CD4-positive, alpha-beta T cell (primary cell): ENCODE measurements at regions of chr17 and their contacts with region 1.

Region 1: DNA sequence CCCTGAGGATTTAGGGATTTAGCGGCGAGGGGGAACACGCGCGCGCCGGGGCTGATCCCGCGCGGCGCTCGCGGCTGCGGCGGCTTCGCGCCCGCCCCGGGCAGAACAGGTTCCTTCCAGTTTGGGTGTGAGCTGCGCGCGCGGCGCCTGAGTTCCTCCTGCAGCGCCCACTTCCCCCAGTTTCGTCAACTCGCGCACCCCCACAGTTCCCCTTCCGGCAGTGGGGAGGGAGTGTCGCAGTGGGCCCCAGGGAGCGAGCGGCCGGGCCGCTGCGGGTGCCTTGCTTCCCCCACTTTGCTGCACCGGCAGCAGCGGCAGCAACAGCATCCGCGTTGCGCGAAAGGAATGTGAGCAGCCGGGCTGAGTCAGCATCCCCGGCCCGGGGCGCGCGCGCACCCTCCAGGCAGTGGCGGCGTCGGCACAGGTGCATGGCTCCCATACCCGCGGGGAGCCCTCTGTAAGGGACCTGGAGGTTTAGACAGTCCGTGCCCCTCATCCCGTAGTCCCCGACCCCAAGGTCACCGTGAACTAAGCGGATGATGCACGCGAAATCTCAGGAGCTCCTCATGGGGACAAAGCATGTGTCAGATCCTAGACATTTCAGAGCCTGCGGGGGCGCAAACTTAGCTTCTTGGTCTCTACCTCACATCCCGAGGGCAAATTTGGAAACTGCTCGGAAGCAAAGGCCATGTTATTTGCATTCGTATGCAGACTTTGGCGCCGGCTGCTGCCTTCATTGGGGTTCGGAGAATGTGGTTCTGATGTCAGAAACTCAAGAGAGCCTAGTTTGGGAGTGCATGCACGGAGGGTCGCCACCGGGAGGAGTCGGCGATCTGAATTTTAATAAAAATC is 775 bp downstream of the ARSG start:
- DNase-seq: peak; percentile 85 to 98 (median 92)
- ATAC-seq: peak; percentile 69
- H3K4me3 ChIP-seq: peak overlapping the region; percentile 56
- H3K4me3 Mint-ChIP-seq: peak overlapping the region; percentile 89
- H3K27ac ChIP-seq: peak overlapping the region; percentile 5 to 82
- H3K27ac Mint-ChIP-seq: peak overlapping the region; percentile 98
- H3K4me1 ChIP-seq: peaks cover 71% of the 10 kb centered on the region
- H3K4me1 Mint-ChIP-seq: peaks cover 76% of the 10 kb centered on the region
- H3K27me3 ChIP-seq: no peaks in the 10 kb centered on the region
- H3K27me3 Mint-ChIP-seq: no peaks in the 10 kb centered on the region
- CTCF ChIP-seq: no peak

Region 2: DNA sequence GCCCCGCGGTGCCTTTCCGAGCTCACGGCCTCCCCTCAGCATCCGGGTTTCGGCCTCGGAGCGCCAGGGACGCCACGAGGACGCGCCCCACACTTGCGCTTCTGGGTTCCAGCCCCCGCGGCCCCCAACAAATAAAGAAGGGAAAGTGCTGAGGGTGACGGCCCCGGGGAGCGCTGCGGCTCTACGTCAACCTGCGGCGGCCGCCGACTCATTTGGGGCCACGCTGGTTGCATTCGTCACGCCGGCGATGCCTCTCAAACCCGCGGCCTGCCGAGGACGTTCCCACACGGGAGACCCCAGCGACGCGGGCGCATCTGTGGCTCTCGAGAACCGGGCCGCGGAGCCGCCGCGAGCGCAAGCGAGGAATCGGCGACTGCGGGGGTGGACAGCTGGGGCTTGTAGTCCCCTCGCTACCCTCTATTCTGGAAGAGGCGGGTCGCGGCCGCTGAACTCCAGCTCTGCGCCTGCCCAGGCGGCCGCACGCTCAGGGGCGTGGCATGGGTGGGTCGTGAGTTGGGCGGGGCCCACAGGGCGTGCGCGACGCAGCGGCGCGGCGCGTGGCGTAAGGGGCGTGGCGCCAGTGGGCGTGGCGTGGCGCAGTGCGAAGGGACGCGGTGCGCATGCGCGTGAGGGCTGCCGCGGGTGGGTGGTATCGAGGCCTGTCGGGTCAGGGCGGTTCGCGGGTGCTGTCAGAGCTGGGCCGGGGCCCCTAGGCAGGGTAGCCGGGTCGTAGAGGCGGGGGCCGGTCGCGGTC is 44.4 kb before region 1 on chr17 and contains the start of gene AMZ2:
- CTCF ChIA-PET with region 1: no interaction called
- POLR2A ChIA-PET with region 1: interaction called, 90 read pairs
- intact Hi-C with region 1: loop called in 1 of 2 experiments (anchors 5 kb)
- DNase-seq: peak; percentile 92 to 99 (median 96)
- ATAC-seq: peak; percentile 89
- H3K4me3 ChIP-seq: peak within 1 kb of the TSS; percentile 92
- H3K4me3 Mint-ChIP-seq: peak within 1 kb of the TSS; percentile 94
- H3K27ac ChIP-seq: peak within 1 kb of the TSS; percentile 97
- H3K27ac Mint-ChIP-seq: peak within 1 kb of the TSS; percentile 93
- H3K4me1 ChIP-seq: peaks cover 37% of the 10 kb centered on the region
- H3K4me1 Mint-ChIP-seq: peaks cover 52% of the 10 kb centered on the region
- H3K27me3 ChIP-seq: no peaks in the 10 kb centered on the region
- H3K27me3 Mint-ChIP-seq: no peaks in the 10 kb centered on the region
- CTCF ChIP-seq: no peak
- total RNA-seq, gene AMZ2: 63.0 to 64.9 TPM

Region 3: DNA sequence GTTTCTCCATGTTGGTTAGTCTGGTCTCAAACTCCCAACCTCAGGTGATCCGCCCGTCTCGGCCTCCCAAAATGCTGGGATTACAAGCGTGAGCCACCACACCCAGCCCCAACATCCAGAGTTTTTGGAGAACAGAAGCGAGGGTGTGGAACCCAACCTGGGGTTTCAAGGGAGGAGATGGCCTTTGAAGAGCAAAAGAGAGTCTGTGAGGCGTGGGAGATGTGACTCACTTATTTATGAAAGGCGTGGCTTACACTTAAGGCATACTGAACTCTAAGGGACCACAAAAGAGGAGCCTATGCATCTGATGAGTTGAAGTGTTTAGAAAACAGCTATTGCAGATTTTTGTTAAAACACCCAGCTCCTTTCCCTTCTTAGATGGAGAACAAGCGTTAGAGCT is 18.1 kb after region 1 on chr17:
- CTCF ChIA-PET with region 1: no interaction called
- POLR2A ChIA-PET with region 1: interaction called, 15 read pairs
- intact Hi-C with region 1: loop called in 1 of 2 experiments (anchors 2 kb)
- DNase-seq: peak in 7 of 14 experiments; percentile 20 to 62 (median 42)
- ATAC-seq: peak; percentile 90
- H3K4me3 ChIP-seq: no peak overlapping the region
- H3K4me3 Mint-ChIP-seq: peak overlapping the region; percentile 45
- H3K27ac ChIP-seq: no peak overlapping the region
- H3K27ac Mint-ChIP-seq: peak overlapping the region; percentile 53
- H3K4me1 ChIP-seq: peaks cover 66% of the 10 kb centered on the region
- H3K4me1 Mint-ChIP-seq: peaks cover 58% of the 10 kb centered on the region
- H3K27me3 ChIP-seq: no peaks in the 10 kb centered on the region
- H3K27me3 Mint-ChIP-seq: no peaks in the 10 kb centered on the region
- CTCF ChIP-seq: no peak

Region 4: GRCh38 chr17:68356520-68356919 is 64.5 kb after region 1 on chr17:
- CTCF ChIA-PET with region 1: no interaction called
- POLR2A ChIA-PET with region 1: interaction called, 94 read pairs
- intact Hi-C with region 1: loop called (anchors 1 kb)
- DNase-seq: peak; percentile 41 to 91 (median 56)
- ATAC-seq: peak; percentile 94
- H3K4me3 ChIP-seq: peak overlapping the region; percentile 11
- H3K4me3 Mint-ChIP-seq: peak overlapping the region; percentile 75
- H3K27ac ChIP-seq: no peak overlapping the region
- H3K27ac Mint-ChIP-seq: peak overlapping the region; percentile 68
- H3K4me1 ChIP-seq: peaks cover 79% of the 10 kb centered on the region
- H3K4me1 Mint-ChIP-seq: peaks cover 62% of the 10 kb centered on the region
- H3K27me3 ChIP-seq: no peaks in the 10 kb centered on the region
- H3K27me3 Mint-ChIP-seq: no peaks in the 10 kb centered on the region
- CTCF ChIP-seq: no peak

Region 5: GRCh38 chr17:68420065-68420464 is 128.0 kb after region 1 on chr17:
- CTCF ChIA-PET with region 1: no interaction called
- POLR2A ChIA-PET with region 1: interaction called, 28 read pairs
- intact Hi-C with region 1: loop called in 1 of 2 experiments (anchors 1 kb)
- DNase-seq: no peak
- ATAC-seq: no peak
- H3K4me3 ChIP-seq: no peak overlapping the region
- H3K4me3 Mint-ChIP-seq: no peak overlapping the region
- H3K27ac ChIP-seq: no peak overlapping the region
- H3K27ac Mint-ChIP-seq: no peak overlapping the region
- H3K4me1 ChIP-seq: no peaks in the 10 kb centered on the region
- H3K4me1 Mint-ChIP-seq: peaks cover 26% of the 10 kb centered on the region
- H3K27me3 ChIP-seq: no peaks in the 10 kb centered on the region
- H3K27me3 Mint-ChIP-seq: no peaks in the 10 kb centered on the region
- CTCF ChIP-seq: no peak

Region 6: DNA sequence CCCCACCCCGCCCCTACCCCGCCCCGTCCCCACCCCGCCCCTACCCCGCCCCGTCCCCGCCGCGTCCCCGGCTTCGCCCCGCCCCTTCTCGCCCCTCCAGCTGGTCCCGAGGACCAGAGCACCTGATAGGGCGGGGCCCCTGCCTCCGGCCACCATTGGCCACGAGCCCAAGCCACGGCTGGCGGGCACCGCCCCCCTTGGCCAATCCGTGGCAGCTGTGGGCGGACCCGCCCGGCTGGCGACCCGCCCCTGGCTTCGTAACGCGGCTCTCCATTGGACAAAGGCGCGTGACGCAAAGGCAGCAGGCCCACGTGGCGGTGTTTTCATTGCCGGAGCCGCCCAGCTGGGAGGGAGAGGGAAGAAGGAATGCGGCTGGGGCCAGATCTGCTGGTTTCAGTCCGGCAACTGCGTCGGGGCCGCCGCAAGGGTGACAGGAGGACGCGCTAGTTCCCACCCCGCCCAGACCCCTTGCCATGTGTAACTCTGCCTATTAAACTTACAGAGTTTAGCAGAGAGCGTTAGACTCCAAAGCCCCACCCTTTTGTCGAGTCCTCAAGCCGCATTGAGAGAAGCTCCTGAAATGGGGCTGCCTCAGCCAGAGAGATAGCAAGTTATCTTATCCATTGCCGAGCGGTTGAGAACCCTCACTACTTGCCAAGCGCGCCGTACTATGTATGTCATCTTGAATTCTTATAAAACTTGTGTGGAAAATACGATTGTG is 165.6 kb after region 1 on chr17:
- CTCF ChIA-PET with region 1: no interaction called
- POLR2A ChIA-PET with region 1: interaction called, 38 read pairs
- intact Hi-C with region 1: loop called in 1 of 2 experiments (anchors 1 kb)
- DNase-seq: peak; percentile 95 to 99 (median 98)
- ATAC-seq: peak; percentile 93
- H3K4me3 ChIP-seq: peak overlapping the region; percentile 77
- H3K4me3 Mint-ChIP-seq: peak overlapping the region; percentile 82
- H3K27ac ChIP-seq: peak overlapping the region; percentile 43 to 59
- H3K27ac Mint-ChIP-seq: peak overlapping the region; percentile 81
- H3K4me1 ChIP-seq: peaks cover 50% of the 10 kb centered on the region
- H3K4me1 Mint-ChIP-seq: peaks cover 51% of the 10 kb centered on the region
- H3K27me3 ChIP-seq: no peaks in the 10 kb centered on the region
- H3K27me3 Mint-ChIP-seq: no peaks in the 10 kb centered on the region
- CTCF ChIP-seq: no peak

Region 7: GRCh38 chr17:69213059-69213813 is 921.2 kb after region 1 on chr17:
- CTCF ChIA-PET with region 1: no interaction called
- POLR2A ChIA-PET with region 1: no interaction called
- intact Hi-C with region 1: no loop called
- DNase-seq: no peak
- ATAC-seq: no peak
- H3K4me3 ChIP-seq: no peak overlapping the region
- H3K4me3 Mint-ChIP-seq: no peak overlapping the region
- H3K27ac ChIP-seq: no peak overlapping the region
- H3K27ac Mint-ChIP-seq: no peak overlapping the region
- H3K4me1 ChIP-seq: no peaks in the 10 kb centered on the region
- H3K4me1 Mint-ChIP-seq: no peaks in the 10 kb centered on the region
- H3K27me3 ChIP-seq: no peaks in the 10 kb centered on the region
- H3K27me3 Mint-ChIP-seq: no peaks in the 10 kb centered on the region
- CTCF ChIP-seq: no peak